ENCODE measurements at regions of chr10 and their contacts with region 1.

Region 1: GRCh38 chr10:28592930-28593329 is 60.0 kb downstream of the WAC start:
- DNase-seq: no peak
- H3K4me3 ChIP-seq: no peak overlapping the region
- H3K27ac ChIP-seq: no peak overlapping the region
- H3K4me1 ChIP-seq: peaks cover 0 to 52% (median 9%) of the 10 kb centered on the region in 4 donors
- H3K27me3 ChIP-seq: no peaks in the 10 kb centered on the region
- CTCF ChIP-seq: no peak

Region 2: GRCh38 chr10:28545967-28546644 is 46.8 kb before region 1 on chr10:
- intact Hi-C with region 1: loop called (anchors 10 kb)
- DNase-seq: no peak
- H3K4me3 ChIP-seq: no peak overlapping the region
- H3K27ac ChIP-seq: no peak overlapping the region
- H3K4me1 ChIP-seq: peaks cover 0 to 60% (median 14%) of the 10 kb centered on the region in 4 donors
- H3K27me3 ChIP-seq: no peaks in the 10 kb centered on the region
- CTCF ChIP-seq: no peak